Body of pancreas (tissue), 4 donors: ENCODE measurements at regions of chr7 and their contacts with region 1.

Region 1: GRCh38 chr7:33243319-33243881 is 114.0 kb downstream of the BBS9 start:
- DNase-seq: peak in 1 of 4 donors; percentile 3
- ATAC-seq: peak; percentile 69
- H3K4me3 ChIP-seq: no peak overlapping the region
- H3K27ac ChIP-seq: no peak overlapping the region
- H3K4me1 ChIP-seq: no peaks in the 10 kb centered on the region
- H3K27me3 ChIP-seq: no peaks in the 10 kb centered on the region
- CTCF ChIP-seq: peak; percentile 28 to 62 (median 55)
- POLR2A ChIP-seq: no peak

Region 2: GRCh38 chr7:33062782-33063443 is 180.5 kb before region 1 on chr7:
- intact Hi-C with region 1: no loop called
- DNase-seq: peak; percentile 91 to 93 (median 92)
- ATAC-seq: peak; percentile 98
- H3K4me3 ChIP-seq: peak overlapping the region; percentile 44 to 79
- H3K27ac ChIP-seq: peak overlapping the region; percentile 84 to 91 (median 88)
- H3K4me1 ChIP-seq: peaks cover 23% of the 10 kb centered on the region
- H3K27me3 ChIP-seq: no peaks in the 10 kb centered on the region
- CTCF ChIP-seq: no peak
- POLR2A ChIP-seq: peak in 2 of 3 donors; percentile 57 to 61

Region 3: GRCh38 chr7:33937871-33938270 is 694.5 kb after region 1 on chr7:
- intact Hi-C with region 1: loop called (anchors 5 kb)
- DNase-seq: no peak
- ATAC-seq: no peak
- H3K4me3 ChIP-seq: no peak overlapping the region
- H3K27ac ChIP-seq: no peak overlapping the region
- H3K4me1 ChIP-seq: no peaks in the 10 kb centered on the region
- H3K27me3 ChIP-seq: no peaks in the 10 kb centered on the region
- CTCF ChIP-seq: no peak
- POLR2A ChIP-seq: no peak